ENCODE measurements at regions of chr10 and their contacts with region 1.

Region 1: GRCh38 chr10:99906470-99906869 is 103.3 kb downstream of the DNMBP start:
- DNase-seq: peak in 3 of 5 donors; percentile 11 to 37 (median 37)
- ATAC-seq: peak in 3 of 4 donors; percentile 58 to 89 (median 68)
- H3K4me3 ChIP-seq: no peak overlapping the region
- H3K27ac ChIP-seq: no peak overlapping the region
- H3K4me1 ChIP-seq: no peaks in the 10 kb centered on the region
- H3K27me3 ChIP-seq: no peaks in the 10 kb centered on the region
- CTCF ChIP-seq: peak in 1 of 12 donors; percentile 16
- POLR2A ChIP-seq: no peak

Region 2: DNA sequence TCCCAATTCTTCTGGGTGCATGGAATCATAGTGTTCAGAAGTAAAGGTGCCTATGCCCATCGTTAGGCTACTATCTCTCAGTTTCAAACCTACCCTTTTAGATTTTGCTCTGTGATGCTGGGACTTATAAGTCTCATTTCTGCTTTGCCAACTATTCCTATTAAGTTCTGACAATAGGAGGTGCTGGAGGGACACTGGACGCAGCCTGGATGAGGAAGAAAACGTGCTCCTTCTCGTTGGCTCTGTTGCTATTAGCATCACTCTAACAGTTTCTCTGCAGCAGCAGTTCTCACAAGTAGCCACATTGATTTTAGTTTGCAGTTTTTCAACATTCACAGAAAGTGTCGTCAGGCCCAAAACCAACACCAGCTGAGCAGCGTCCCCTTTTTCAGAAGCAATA is 51.6 kb before region 1 on chr10:
- intact Hi-C with region 1: loop called in 1 of 10 experiments (anchors 10 kb)
- DNase-seq: peak in 1 of 5 donors; percentile 20
- ATAC-seq: peak in 3 of 4 donors; percentile 62 to 75 (median 73)
- H3K4me3 ChIP-seq: no peak overlapping the region
- H3K27ac ChIP-seq: no peak overlapping the region
- H3K4me1 ChIP-seq: no peaks in the 10 kb centered on the region
- H3K27me3 ChIP-seq: no peaks in the 10 kb centered on the region
- CTCF ChIP-seq: peak; percentile 5 to 67 (median 48)
- POLR2A ChIP-seq: no peak